Activated CD4-positive, alpha-beta T cell treated with anti-CD3 and anti-CD28 coated beads, Interleukin-2, amount 10 ng/mL, durations not matched to agents 24 days and 14 days (primary cell): ENCODE measurements at regions of chr6 and their contacts with region 1.

Region 1: GRCh38 chr6:70166088-70166958 is 136.6 kb downstream of the COL9A1 start:
- DNase-seq: peak; percentile 77
- H3K4me3 Mint-ChIP-seq: no peak overlapping the region
- H3K27ac Mint-ChIP-seq: no peak overlapping the region
- H3K4me1 Mint-ChIP-seq: no peaks in the 10 kb centered on the region
- H3K27me3 Mint-ChIP-seq: peaks cover 24% of the 10 kb centered on the region

Region 2: DNA sequence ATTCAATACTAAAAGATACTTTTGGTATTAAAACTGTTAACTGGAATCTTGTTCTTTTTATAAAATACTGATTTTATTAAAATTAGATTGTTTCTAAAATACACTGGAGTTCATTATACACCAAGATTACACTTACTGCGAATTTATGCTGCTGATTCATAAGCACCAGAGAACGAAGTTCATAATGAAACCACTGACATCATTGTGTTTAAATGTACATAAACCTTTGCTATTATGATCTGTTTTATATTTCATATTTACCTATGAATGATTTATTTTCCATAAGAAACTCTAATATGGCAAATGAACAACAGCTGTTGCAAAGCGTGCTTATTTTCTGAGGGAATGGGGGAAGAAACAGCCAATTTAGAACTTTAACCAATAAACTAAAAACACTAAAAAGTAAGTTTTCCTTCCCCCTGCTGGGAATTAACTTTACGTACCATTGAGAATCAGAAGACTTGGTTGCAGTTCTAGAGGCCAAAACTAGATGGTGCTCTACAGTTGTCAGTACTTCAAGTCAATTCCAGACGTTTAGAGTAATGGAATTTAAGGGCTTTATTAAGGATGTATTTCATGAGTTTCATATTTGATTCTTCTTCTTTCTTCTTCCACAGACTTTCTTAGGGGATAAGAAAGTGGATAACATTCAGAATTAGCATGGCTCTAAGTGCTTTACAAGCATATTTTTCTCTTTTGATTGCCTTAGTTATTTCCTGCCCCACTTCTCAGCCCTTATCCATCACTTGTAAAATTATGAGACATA is 330.7 kb before region 1 on chr6:
- intact Hi-C with region 1: loop called (anchors 5 kb)
- DNase-seq: peak; percentile 71
- H3K4me3 Mint-ChIP-seq: no peak overlapping the region
- H3K27ac Mint-ChIP-seq: no peak overlapping the region
- H3K4me1 Mint-ChIP-seq: peaks cover 2% of the 10 kb centered on the region
- H3K27me3 Mint-ChIP-seq: peaks cover 35% of the 10 kb centered on the region